ENCODE measurements at regions of chr7 and their contacts with region 1.

Region 1: GRCh38 chr7:80883188-80884025 is 35.4 kb downstream of the SEMA3C start:
- DNase-seq: no peak
- ATAC-seq: no peak
- H3K4me3 ChIP-seq: no peak overlapping the region
- H3K4me3 Mint-ChIP-seq: no peak overlapping the region
- H3K27ac ChIP-seq: no peak overlapping the region
- H3K27ac Mint-ChIP-seq: no peak overlapping the region
- H3K4me1 ChIP-seq: no peaks in the 10 kb centered on the region
- H3K4me1 Mint-ChIP-seq: no peaks in the 10 kb centered on the region
- H3K27me3 ChIP-seq: no peaks in the 10 kb centered on the region
- H3K27me3 Mint-ChIP-seq: no peaks in the 10 kb centered on the region
- CTCF ChIP-seq: no peak

Region 2: GRCh38 chr7:80851894-80852476 is 31.4 kb before region 1 on chr7:
- intact Hi-C with region 1: no loop called
- DNase-seq: no peak
- ATAC-seq: no peak
- H3K4me3 ChIP-seq: no peak overlapping the region
- H3K4me3 Mint-ChIP-seq: no peak overlapping the region
- H3K27ac ChIP-seq: no peak overlapping the region
- H3K27ac Mint-ChIP-seq: no peak overlapping the region
- H3K4me1 ChIP-seq: no peaks in the 10 kb centered on the region
- H3K4me1 Mint-ChIP-seq: no peaks in the 10 kb centered on the region
- H3K27me3 ChIP-seq: no peaks in the 10 kb centered on the region
- H3K27me3 Mint-ChIP-seq: no peaks in the 10 kb centered on the region
- CTCF ChIP-seq: no peak

Region 3: DNA sequence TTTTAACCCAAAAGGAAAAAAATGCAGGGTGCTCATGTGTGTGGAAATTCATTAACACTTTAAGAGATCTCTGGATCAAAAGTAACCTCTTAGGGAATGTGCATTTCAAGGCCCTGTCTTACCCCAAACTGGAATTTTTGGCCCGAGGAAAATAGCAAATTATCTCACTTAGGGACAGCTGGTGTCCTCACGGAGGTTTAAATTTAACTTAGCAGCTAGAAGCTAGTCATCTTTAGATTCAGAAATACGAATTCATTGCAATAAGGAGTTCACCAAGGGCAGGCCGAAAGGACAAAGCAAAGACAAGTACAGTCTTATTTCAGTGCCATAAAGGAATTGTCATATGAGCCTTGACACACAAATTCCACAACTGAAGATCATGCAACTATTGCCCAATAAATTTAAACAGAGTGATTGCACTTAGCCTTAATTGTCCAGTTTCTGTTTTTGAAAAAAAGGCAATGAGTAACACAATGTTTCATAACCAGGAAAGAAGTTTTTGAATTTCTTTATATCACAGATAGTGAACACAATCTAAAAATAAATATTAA is 57.9 kb after region 1 on chr7:
- intact Hi-C with region 1: loop called (anchors 10 kb)
- DNase-seq: no peak
- ATAC-seq: no peak
- H3K4me3 ChIP-seq: no peak overlapping the region
- H3K4me3 Mint-ChIP-seq: no peak overlapping the region
- H3K27ac ChIP-seq: no peak overlapping the region
- H3K27ac Mint-ChIP-seq: no peak overlapping the region
- H3K4me1 ChIP-seq: no peaks in the 10 kb centered on the region
- H3K4me1 Mint-ChIP-seq: no peaks in the 10 kb centered on the region
- H3K27me3 ChIP-seq: no peaks in the 10 kb centered on the region
- H3K27me3 Mint-ChIP-seq: no peaks in the 10 kb centered on the region
- CTCF ChIP-seq: no peak

Region 4: GRCh38 chr7:81190997-81191768 is 307.8 kb after region 1 on chr7:
- intact Hi-C with region 1: no loop called
- DNase-seq: no peak
- ATAC-seq: no peak
- H3K4me3 ChIP-seq: no peak overlapping the region
- H3K4me3 Mint-ChIP-seq: no peak overlapping the region
- H3K27ac ChIP-seq: no peak overlapping the region
- H3K27ac Mint-ChIP-seq: no peak overlapping the region
- H3K4me1 ChIP-seq: no peaks in the 10 kb centered on the region
- H3K4me1 Mint-ChIP-seq: no peaks in the 10 kb centered on the region
- H3K27me3 ChIP-seq: no peaks in the 10 kb centered on the region
- H3K27me3 Mint-ChIP-seq: no peaks in the 10 kb centered on the region
- CTCF ChIP-seq: no peak

Measured in natural killer cell (primary cell).